Activated naive CD4-positive, alpha-beta T cell treated with anti-CD3 and anti-CD28 coated beads for 36 hours (primary cell): ENCODE measurements at regions of chr1 and their contacts with region 1.

Region 1: GRCh38 chr1:77978969-77979876 is at the start of gene FUBP1:
- DNase-seq: peak; percentile 99
- H3K4me3 Mint-ChIP-seq: no peak within 1 kb of the TSS
- H3K27ac Mint-ChIP-seq: no peak within 1 kb of the TSS
- H3K4me1 Mint-ChIP-seq: peaks cover 47% of the 10 kb centered on the region
- H3K27me3 Mint-ChIP-seq: no peaks in the 10 kb centered on the region
- total RNA-seq, gene FUBP1: 243 to 244 TPM

Region 2: GRCh38 chr1:76285578-76286135 is 1693.6 kb before region 1 on chr1:
- CTCF ChIA-PET with region 1: no interaction called
- intact Hi-C with region 1: loop called (anchors 5 kb)
- DNase-seq: peak; percentile 56
- H3K4me3 Mint-ChIP-seq: no peak overlapping the region
- H3K27ac Mint-ChIP-seq: peak overlapping the region; percentile 62
- H3K4me1 Mint-ChIP-seq: peaks cover 61% of the 10 kb centered on the region
- H3K27me3 Mint-ChIP-seq: no peaks in the 10 kb centered on the region

Region 3: GRCh38 chr1:77313491-77313890 is 665.7 kb before region 1 on chr1:
- CTCF ChIA-PET with region 1: no interaction called
- intact Hi-C with region 1: loop called (anchors 2 kb)
- DNase-seq: peak; percentile 59
- H3K4me3 Mint-ChIP-seq: no peak overlapping the region
- H3K27ac Mint-ChIP-seq: no peak overlapping the region
- H3K4me1 Mint-ChIP-seq: peaks cover 37% of the 10 kb centered on the region
- H3K27me3 Mint-ChIP-seq: no peaks in the 10 kb centered on the region

Region 4: GRCh38 chr1:77759071-77760028 is 219.9 kb before region 1 on chr1 and contains the start of gene USP33:
- CTCF ChIA-PET with region 1: no interaction called
- intact Hi-C with region 1: loop called (anchors 1 kb)
- DNase-seq: peak; percentile 93
- H3K4me3 Mint-ChIP-seq: peak within 1 kb of the TSS; percentile 90
- H3K27ac Mint-ChIP-seq: peak within 1 kb of the TSS; percentile 93
- H3K4me1 Mint-ChIP-seq: peaks cover 46% of the 10 kb centered on the region
- H3K27me3 Mint-ChIP-seq: no peaks in the 10 kb centered on the region
- total RNA-seq, gene USP33: 32.6 to 35.6 TPM

Region 5: DNA sequence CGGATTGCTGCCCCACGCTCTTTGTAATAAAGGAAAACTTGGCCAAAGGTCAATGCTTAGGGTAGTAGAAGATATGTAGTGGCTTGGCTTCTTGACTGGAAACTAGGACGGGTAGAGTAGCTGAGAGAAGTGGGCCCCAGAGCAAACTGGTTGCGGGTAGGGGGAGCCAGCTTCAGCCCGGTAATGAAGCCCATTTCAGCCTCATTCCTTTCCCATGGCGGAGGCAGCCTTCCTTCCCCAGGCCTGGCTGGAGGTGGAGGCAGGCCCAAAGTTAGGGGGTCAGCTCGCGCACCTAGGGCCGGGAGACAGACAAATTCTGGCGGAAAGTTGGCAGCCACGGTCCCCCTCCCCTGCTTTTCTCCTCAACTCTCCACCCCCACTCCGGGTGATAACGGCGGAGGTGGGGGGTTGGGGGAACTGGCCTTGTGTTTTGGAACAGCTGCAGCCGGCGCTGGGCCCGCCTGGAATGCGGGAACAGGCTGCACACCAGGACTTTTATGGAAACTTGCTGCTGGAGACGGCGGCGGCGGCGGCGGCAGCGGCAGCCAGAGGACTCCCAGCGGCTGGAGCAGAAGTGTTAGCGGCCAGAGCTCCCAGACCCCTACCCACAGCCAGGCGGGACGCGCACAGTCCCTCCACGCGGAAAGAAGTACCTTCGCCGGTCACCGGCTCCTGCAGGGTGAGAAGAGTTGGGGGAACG is 91.0 kb before region 1 on chr1 and contains the start of gene NEXN:
- CTCF ChIA-PET with region 1: no interaction called
- intact Hi-C with region 1: no loop called
- DNase-seq: peak; percentile 7
- H3K4me3 Mint-ChIP-seq: peak within 1 kb of the TSS; percentile 66
- H3K27ac Mint-ChIP-seq: no peak within 1 kb of the TSS
- H3K4me1 Mint-ChIP-seq: peaks cover 7% of the 10 kb centered on the region
- H3K27me3 Mint-ChIP-seq: peaks cover 18% of the 10 kb centered on the region
- total RNA-seq, gene NEXN: 1.7 to 1.9 TPM

Region 6: DNA sequence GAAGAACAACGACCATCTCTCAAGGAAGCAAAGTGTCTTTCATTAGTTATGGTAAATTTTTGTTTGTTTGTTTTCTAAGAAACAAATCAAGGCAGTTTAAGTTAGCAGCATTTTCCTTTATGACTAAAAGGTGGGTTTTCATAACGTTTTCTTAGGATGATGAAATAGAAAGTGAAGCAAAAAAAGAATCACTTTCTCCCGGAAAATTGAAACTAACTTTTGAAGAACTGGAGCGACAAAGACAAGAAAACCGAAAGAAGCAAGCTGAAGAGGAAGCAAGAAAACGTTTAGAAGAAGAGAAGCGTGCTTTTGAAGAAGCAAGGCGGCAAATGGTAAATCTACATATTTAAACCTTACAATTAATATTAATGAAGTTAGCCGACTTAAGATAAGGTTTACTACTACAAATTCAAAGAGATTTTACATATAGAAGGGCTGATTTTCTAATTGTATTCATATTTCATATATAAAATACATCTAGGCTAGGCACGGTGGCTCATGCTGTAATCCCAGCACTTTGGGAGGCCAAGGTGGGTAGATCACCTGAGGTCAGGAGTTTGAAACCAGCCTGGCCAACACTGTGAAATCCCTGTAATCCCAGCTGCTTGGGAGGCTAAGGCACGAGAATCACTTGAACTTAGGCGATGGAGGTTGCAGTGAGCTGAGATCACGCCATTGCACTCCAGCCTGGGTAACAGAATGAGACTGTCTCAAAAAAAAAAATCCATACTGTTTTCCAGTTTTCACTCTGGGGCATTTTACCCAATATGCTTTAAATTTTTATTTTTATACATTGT is 52.5 kb before region 1 on chr1:
- CTCF ChIA-PET with region 1: no interaction called
- intact Hi-C with region 1: loop called (anchors 1 kb)
- DNase-seq: no peak
- H3K4me3 Mint-ChIP-seq: peak overlapping the region; percentile 70
- H3K27ac Mint-ChIP-seq: peak overlapping the region; percentile 69
- H3K4me1 Mint-ChIP-seq: peaks cover 10% of the 10 kb centered on the region
- H3K27me3 Mint-ChIP-seq: no peaks in the 10 kb centered on the region

Region 7: GRCh38 chr1:78004719-78005447 is 25.7 kb after region 1 on chr1 and contains the start of gene DNAJB4:
- CTCF ChIA-PET with region 1: interaction called, 8 read pairs
- intact Hi-C with region 1: loop called (anchors 1 kb)
- DNase-seq: peak; percentile 82
- H3K4me3 Mint-ChIP-seq: peak within 1 kb of the TSS; percentile 88
- H3K27ac Mint-ChIP-seq: peak within 1 kb of the TSS; percentile 100
- H3K4me1 Mint-ChIP-seq: peaks cover 39% of the 10 kb centered on the region
- H3K27me3 Mint-ChIP-seq: peaks cover 3% of the 10 kb centered on the region
- total RNA-seq, gene DNAJB4: 9.7 to 10.4 TPM

Region 8: DNA sequence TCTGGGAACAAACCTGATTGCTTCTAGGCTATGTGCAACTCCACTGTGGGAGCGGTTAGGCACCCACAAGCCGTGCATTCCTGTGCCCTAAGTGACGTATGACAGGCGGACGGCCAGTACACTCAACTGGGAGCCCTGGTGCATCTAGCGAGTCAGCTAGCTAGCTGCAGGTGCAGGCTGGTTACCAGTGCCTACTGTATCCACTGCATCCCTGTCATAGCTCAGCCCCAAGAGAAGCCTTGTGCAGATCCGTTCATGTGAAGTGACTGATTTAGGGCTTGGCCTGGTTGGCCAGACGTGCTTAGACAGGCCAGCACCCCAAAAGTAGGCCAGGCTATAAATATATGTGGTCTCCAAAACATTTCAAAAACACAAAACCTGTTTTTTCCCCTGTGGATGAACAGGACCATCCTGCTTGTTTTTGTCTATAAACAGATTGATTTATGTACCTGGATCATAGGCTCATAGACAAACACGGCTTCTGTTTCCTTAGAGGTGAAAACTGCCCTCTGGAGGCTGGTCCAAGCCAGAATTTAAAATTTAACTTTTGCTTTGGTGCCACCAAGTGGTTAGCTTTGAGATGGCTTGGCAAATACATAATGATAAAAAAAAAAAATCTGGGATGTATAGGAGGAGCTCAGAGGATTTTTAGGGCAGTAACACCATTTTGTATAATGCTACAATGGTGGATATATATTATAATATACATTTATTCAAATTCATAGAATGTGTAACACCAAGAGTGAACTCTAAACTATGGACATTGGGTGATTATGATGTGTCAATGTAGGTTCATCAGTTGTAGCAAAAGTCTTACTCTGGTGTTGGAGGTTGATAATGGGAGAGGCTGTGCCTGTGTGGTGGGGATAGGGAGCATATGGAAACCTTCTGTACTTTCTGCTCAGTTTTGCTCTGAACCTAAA is 135.1 kb after region 1 on chr1:
- CTCF ChIA-PET with region 1: interaction called, 13 read pairs
- intact Hi-C with region 1: loop called (anchors 1 kb)
- DNase-seq: peak; percentile 79
- H3K4me3 Mint-ChIP-seq: no peak overlapping the region
- H3K27ac Mint-ChIP-seq: no peak overlapping the region
- H3K4me1 Mint-ChIP-seq: peaks cover 8% of the 10 kb centered on the region
- H3K27me3 Mint-ChIP-seq: no peaks in the 10 kb centered on the region